ENCODE measurements at regions of chr4 and their contacts with region 1.

Region 1: GRCh38 chr4:47122592-47123291 is 91.4 kb downstream of the GABRB1 start:
- DNase-seq: peak; percentile 68
- H3K4me3 Mint-ChIP-seq: no peak overlapping the region
- H3K27ac Mint-ChIP-seq: no peak overlapping the region
- H3K4me1 Mint-ChIP-seq: no peaks in the 10 kb centered on the region
- H3K27me3 Mint-ChIP-seq: no peaks in the 10 kb centered on the region

Region 2: GRCh38 chr4:46844325-46844917 is 278.3 kb before region 1 on chr4:
- CTCF ChIA-PET with region 1: interaction called, 14 read pairs
- intact Hi-C with region 1: loop called (anchors 1 kb)
- DNase-seq: peak; percentile 66
- H3K4me3 Mint-ChIP-seq: no peak overlapping the region
- H3K27ac Mint-ChIP-seq: no peak overlapping the region
- H3K4me1 Mint-ChIP-seq: no peaks in the 10 kb centered on the region
- H3K27me3 Mint-ChIP-seq: no peaks in the 10 kb centered on the region

Region 3: DNA sequence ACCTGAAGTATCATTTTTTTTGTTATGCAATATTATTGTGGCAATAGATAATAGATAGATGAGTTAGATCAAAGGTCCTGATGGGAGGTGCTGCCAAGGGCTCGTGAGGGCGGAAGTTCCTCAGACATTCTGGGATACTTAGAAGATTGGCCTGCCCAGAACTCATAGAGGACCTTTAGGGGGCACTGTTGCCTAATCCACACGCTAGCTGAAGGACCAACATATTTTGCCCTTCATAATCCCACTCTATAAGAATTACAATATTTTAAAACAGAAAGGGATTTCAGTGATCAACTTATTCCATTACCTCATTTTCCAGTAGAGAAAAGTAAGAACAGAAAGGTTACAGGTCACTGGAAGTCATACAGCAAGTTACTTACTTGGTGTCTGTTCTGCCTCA is 190.8 kb before region 1 on chr4:
- CTCF ChIA-PET with region 1: no interaction called
- intact Hi-C with region 1: loop called (anchors 1 kb)
- DNase-seq: peak; percentile 24
- H3K4me3 Mint-ChIP-seq: no peak overlapping the region
- H3K27ac Mint-ChIP-seq: no peak overlapping the region
- H3K4me1 Mint-ChIP-seq: no peaks in the 10 kb centered on the region
- H3K27me3 Mint-ChIP-seq: peaks cover 9% of the 10 kb centered on the region

Region 4: GRCh38 chr4:47010912-47011446 is 111.8 kb before region 1 on chr4:
- CTCF ChIA-PET with region 1: interaction called, 10 read pairs
- intact Hi-C with region 1: no loop called
- DNase-seq: peak; percentile 5
- H3K4me3 Mint-ChIP-seq: no peak overlapping the region
- H3K27ac Mint-ChIP-seq: peak overlapping the region; percentile 36
- H3K4me1 Mint-ChIP-seq: peaks cover 17% of the 10 kb centered on the region
- H3K27me3 Mint-ChIP-seq: no peaks in the 10 kb centered on the region

Region 5: GRCh38 chr4:47224361-47224760 is 101.6 kb after region 1 on chr4:
- CTCF ChIA-PET with region 1: no interaction called
- intact Hi-C with region 1: no loop called
- DNase-seq: no peak
- H3K4me3 Mint-ChIP-seq: no peak overlapping the region
- H3K27ac Mint-ChIP-seq: no peak overlapping the region
- H3K4me1 Mint-ChIP-seq: no peaks in the 10 kb centered on the region
- H3K27me3 Mint-ChIP-seq: peaks cover 2% of the 10 kb centered on the region

Measured in activated naive CD4-positive, alpha-beta T cell treated with anti-CD3 and anti-CD28 coated beads for 36 hours (primary cell).